Calu3 (cell line): ENCODE measurements at regions of chr14 and their contacts with region 1.

Region 1: DNA sequence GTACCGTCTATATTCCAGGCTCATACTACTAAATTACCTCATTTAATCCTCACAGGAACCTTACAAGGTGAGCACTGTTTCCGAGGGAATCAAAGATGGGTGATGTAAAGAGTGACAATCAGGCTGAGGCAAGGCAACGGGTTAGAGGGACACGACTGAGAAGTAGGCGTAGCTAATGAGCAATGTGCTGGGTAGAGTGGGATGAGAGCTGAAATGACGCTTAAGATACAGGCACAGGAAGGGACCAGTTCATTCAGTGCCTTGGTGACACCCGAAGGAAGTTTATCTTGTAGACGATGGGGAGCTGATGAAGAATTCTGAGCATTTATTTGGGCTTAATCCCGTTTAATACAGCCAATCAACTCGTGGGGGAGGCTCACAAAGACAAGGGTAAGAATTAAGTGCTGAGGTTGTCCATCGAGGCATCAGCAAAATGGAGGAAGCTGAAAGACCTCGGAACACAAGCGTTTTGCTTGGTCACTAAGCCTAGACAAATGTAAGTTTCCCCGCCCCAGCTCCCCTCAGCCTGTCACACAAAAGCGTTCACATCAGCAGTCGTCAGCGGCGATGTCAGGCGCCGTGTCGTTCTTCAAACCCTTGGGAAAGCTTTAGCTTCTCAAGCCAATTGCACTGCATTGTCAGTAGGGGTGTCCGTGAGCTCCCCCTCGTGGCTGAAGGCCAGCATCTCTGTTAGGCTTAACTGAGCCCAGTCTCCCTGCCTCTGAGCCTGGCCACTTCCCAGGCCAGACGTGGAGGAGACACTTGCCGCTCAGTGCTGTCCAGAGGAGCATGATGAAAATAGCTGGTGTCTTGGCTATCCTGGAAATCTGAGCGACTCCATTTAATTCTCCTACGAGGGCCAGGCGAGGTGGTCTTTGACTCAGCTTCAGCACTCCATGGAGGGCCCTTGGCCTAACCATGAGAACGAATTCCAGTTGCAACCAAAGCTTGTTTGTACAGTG is 288.5 kb upstream of the G2E3 start:
- DNase-seq: peak; percentile 85
- H3K4me3 Mint-ChIP-seq: no peak overlapping the region
- H3K27ac Mint-ChIP-seq: no peak overlapping the region
- H3K4me1 Mint-ChIP-seq: no peaks in the 10 kb centered on the region
- H3K27me3 Mint-ChIP-seq: no peaks in the 10 kb centered on the region
- CTCF ChIP-seq: peak; percentile 79

Region 2: DNA sequence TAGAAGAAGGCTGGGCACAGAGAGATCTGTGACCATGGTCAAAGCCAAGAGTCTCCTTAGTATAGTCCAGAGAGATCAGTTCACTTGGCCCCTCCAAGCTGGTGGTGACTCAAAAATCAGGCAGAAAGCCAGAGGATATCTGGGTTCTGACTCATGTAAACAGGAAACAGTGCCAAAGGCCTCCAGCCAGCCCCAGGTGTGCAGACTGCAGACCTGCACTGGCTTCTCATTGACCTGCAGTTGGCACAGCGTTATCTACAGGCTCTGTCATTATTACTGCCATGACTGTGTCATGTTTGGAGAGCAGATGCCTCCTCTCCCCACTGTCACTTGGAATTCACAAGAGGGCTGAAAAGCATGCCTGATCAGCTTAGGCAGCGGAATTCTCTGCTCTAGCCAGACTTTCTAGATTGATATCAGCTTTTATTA is 47.1 kb before region 1 on chr14:
- CTCF ChIA-PET with region 1: interaction called, 5 read pairs
- intact Hi-C with region 1: loop called (anchors 5 kb)
- DNase-seq: peak; percentile 87
- H3K4me3 Mint-ChIP-seq: peak overlapping the region; percentile 27
- H3K27ac Mint-ChIP-seq: peak overlapping the region; percentile 48
- H3K4me1 Mint-ChIP-seq: peaks cover 61% of the 10 kb centered on the region
- H3K27me3 Mint-ChIP-seq: no peaks in the 10 kb centered on the region
- CTCF ChIP-seq: no peak

Region 3: GRCh38 chr14:30234966-30235365 is 35.5 kb before region 1 on chr14:
- CTCF ChIA-PET with region 1: no interaction called
- intact Hi-C with region 1: no loop called
- DNase-seq: no peak
- H3K4me3 Mint-ChIP-seq: no peak overlapping the region
- H3K27ac Mint-ChIP-seq: no peak overlapping the region
- H3K4me1 Mint-ChIP-seq: no peaks in the 10 kb centered on the region
- H3K27me3 Mint-ChIP-seq: no peaks in the 10 kb centered on the region
- CTCF ChIP-seq: no peak